ENCODE measurements at regions of chr1 and their contacts with region 1.

Region 1: DNA sequence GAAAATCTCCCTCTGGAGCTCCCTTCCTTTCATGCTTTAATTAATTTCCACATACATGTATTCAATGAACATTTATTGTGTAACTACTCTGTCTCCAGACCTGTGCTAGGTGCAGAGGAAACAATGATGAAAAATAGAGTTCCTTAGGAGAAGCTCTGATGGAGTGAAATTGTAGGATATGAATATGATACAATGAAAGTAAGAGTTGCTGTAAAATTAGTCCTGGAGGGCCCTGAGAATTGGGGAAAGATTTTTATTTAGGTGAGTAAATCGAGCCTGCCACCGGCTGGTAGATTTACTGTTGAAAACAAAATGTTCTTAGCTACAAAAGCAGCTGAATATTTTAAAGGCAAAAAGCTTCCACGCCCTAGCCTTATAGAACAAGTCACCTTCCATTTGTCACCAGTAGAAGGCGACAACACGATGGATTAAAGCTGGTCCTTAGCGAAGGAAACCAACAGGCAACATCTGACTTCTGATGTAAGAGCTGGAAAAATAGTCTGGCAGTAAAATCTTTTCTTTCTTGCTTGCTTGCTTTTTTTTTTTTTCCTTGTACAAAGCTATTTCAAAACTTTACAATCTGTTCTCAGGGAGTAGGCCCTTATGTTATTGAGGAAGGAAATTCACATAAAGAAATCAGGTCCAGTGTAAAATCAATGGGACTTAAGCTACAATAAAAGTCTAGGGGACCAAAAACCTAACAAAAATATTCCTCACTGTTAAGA is 82.0 kb upstream of the ROR1 start:
- DNase-seq: peak; percentile 88
- H3K4me3 ChIP-seq: no peak overlapping the region
- H3K27ac ChIP-seq: peak overlapping the region; percentile 69
- H3K4me1 ChIP-seq: peaks cover 7% of the 10 kb centered on the region
- H3K27me3 ChIP-seq: no peaks in the 10 kb centered on the region
- CTCF ChIP-seq: peak; percentile 88

Region 2: DNA sequence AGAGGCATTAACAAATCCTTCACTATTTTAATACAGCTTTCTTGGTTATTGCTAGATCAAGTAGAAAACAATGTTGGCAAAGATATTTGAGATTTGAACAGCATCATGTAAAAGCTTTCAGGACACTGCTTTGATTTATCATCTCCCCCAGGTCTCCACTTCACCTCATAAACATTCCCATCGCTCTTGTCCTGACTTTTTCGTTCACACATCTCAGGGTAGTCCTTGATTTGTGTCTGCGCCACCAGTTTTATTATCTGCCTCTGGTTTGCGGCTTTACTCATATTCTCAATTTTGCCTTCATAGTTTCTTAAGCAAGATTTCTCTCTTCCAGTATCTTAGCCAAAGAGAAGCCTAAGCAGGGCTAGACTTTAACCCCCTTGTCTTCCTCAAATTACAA is 18.4 kb after region 1 on chr1:
- CTCF ChIA-PET with region 1: interaction called, 13 read pairs
- POLR2A ChIA-PET with region 1: no interaction called
- intact Hi-C with region 1: no loop called
- DNase-seq: no peak
- H3K4me3 ChIP-seq: no peak overlapping the region
- H3K27ac ChIP-seq: no peak overlapping the region
- H3K4me1 ChIP-seq: peaks cover 8% of the 10 kb centered on the region
- H3K27me3 ChIP-seq: no peaks in the 10 kb centered on the region
- CTCF ChIP-seq: no peak

Region 3: DNA sequence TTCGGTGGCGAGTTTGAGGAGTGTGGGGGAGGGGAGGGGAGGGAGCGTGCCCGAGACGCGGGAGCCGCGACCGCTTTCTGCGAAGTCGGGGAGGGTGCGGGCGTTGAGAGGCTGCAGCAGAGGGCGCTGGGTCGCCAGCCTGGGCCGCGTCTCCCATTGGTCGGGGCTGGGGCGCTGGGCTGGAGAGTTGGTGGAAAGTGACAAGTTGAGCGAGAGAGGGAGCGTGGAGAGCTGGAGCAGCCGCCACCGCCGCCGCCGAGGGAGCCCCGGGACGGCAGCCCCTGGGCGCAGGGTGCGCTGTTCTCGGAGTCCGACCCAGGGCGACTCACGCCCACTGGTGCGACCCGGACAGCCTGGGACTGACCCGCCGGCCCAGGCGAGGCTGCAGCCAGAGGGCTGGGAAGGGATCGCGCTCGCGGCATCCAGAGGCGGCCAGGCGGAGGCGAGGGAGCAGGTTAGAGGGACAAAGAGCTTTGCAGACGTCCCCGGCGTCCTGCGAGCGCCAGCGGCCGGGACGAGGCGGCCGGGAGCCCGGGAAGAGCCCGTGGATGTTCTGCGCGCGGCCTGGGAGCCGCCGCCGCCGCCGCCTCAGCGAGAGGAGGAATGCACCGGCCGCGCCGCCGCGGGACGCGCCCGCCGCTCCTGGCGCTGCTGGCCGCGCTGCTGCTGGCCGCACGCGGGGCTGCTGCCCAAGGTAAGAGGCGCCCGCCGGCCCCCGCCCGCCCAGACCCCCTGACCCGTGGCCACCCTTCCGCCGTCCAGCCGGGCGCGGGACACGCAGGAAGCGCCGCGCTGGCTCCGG is 82.2 kb after region 1 on chr1 and contains the start of gene ROR1:
- CTCF ChIA-PET with region 1: interaction called, 4 read pairs
- POLR2A ChIA-PET with region 1: no interaction called
- intact Hi-C with region 1: loop called (anchors 5 kb)
- DNase-seq: peak; percentile 93
- H3K4me3 ChIP-seq: peak within 1 kb of the TSS; percentile 80
- H3K27ac ChIP-seq: peak within 1 kb of the TSS; percentile 52
- H3K4me1 ChIP-seq: peaks cover 15% of the 10 kb centered on the region
- H3K27me3 ChIP-seq: no peaks in the 10 kb centered on the region
- CTCF ChIP-seq: peak; percentile 83
- total RNA-seq, gene ROR1: 7.4 and 8.3 TPM in 2 replicates

Region 4: DNA sequence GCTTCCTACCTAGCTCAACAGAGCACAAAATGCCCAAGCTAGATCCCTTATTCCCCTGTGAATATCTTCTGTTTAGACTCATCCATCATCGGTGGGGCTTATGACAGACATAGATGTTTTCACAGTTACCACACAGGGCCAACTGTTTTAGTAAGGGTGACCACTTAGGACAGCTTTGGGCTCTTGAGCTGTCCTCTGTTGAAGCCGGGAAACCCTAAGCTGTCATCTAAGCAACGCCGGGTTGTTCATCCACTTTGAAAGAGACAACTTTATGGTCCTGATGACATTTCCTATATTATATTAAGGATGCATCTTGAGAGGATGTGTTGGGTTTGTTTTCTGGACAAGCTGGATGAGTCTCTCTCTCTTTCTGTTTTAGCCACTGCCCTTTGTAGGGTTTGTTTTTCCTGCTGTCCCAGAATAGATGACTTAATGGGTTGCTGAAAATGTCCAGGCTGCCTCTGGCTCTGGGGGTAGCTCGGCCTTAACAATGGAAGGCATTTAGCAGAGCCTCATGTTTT is 401.0 kb after region 1 on chr1:
- CTCF ChIA-PET with region 1: no interaction called
- POLR2A ChIA-PET with region 1: interaction called, 10 read pairs
- intact Hi-C with region 1: no loop called
- DNase-seq: no peak
- H3K4me3 ChIP-seq: no peak overlapping the region
- H3K27ac ChIP-seq: no peak overlapping the region
- H3K4me1 ChIP-seq: no peaks in the 10 kb centered on the region
- H3K27me3 ChIP-seq: no peaks in the 10 kb centered on the region
- CTCF ChIP-seq: no peak

Region 5: GRCh38 chr1:64242895-64243756 is 551.3 kb after region 1 on chr1:
- CTCF ChIA-PET with region 1: interaction called, 15 read pairs
- POLR2A ChIA-PET with region 1: no interaction called
- intact Hi-C with region 1: loop called (anchors 1 kb)
- DNase-seq: peak; percentile 75
- H3K4me3 ChIP-seq: peak overlapping the region; percentile 16
- H3K27ac ChIP-seq: peak overlapping the region; percentile 72
- H3K4me1 ChIP-seq: peaks cover 48% of the 10 kb centered on the region
- H3K27me3 ChIP-seq: no peaks in the 10 kb centered on the region
- CTCF ChIP-seq: peak; percentile 72

Measured in A673 (cell line).